ENCODE measurements at regions of chr7 and their contacts with region 1.

Region 1: DNA sequence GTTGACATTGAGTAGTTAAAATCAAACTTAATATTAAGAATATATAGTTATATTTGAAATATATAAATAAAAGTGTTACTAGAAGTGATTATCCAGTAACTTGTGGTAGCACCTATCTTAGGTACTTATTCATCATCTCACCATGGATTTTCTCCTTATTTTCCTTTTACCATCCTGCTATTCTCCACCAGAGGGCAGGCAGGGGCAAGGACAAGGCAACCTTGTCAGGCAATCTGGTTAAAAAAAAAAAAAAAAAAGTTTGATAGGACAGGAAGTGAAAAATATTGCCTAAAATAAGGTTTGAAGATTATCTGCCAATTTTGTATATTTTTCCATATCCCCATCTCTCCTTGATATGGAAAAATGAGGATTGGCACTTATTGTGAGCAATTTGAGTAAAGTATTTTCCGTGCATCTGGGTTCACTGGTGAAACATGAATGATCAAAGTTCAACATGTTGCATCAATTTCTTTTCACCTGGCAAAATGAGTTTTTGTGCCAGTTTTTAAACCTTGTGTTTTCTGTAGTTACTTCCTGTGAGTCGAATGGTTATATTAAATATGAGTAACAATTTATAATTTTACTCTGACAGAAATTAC is 256.7 kb downstream of the AGMO start:
- DNase-seq: peak in 2 of 3 donors; percentile 28 to 66
- ATAC-seq: no peak
- H3K4me3 ChIP-seq: no peak overlapping the region
- H3K27ac ChIP-seq: no peak overlapping the region
- H3K4me1 ChIP-seq: no peaks in the 10 kb centered on the region
- H3K27me3 ChIP-seq: no peaks in the 10 kb centered on the region

Region 2: GRCh38 chr7:15593382-15593781 is 288.3 kb after region 1 on chr7:
- intact Hi-C with region 1: no loop called
- DNase-seq: no peak
- ATAC-seq: no peak
- H3K4me3 ChIP-seq: no peak overlapping the region
- H3K27ac ChIP-seq: no peak overlapping the region
- H3K4me1 ChIP-seq: no peaks in the 10 kb centered on the region
- H3K27me3 ChIP-seq: no peaks in the 10 kb centered on the region

Region 3: DNA sequence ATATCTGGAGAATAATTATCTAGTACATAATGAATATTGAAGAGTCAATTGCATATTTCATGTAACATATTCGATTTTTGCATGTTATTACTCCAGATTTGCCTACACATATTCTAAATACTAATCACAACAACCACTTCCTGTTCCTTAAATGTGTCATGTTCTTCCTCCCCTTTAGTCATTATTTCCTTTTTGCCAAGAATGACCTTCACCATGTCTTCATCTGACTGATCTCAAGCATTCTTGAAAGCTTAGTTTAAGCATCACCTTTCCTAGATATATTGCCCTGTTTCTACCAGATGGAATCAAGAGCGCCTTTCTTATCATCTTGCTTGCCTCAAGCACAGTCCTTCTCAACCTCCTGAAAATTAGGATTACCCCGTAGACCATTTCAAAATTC is 404.9 kb after region 1 on chr7:
- intact Hi-C with region 1: loop called in 1 of 4 experiments (anchors 10 kb)
- DNase-seq: no peak
- ATAC-seq: no peak
- H3K4me3 ChIP-seq: no peak overlapping the region
- H3K27ac ChIP-seq: no peak overlapping the region
- H3K4me1 ChIP-seq: no peaks in the 10 kb centered on the region
- H3K27me3 ChIP-seq: no peaks in the 10 kb centered on the region

Region 4: DNA sequence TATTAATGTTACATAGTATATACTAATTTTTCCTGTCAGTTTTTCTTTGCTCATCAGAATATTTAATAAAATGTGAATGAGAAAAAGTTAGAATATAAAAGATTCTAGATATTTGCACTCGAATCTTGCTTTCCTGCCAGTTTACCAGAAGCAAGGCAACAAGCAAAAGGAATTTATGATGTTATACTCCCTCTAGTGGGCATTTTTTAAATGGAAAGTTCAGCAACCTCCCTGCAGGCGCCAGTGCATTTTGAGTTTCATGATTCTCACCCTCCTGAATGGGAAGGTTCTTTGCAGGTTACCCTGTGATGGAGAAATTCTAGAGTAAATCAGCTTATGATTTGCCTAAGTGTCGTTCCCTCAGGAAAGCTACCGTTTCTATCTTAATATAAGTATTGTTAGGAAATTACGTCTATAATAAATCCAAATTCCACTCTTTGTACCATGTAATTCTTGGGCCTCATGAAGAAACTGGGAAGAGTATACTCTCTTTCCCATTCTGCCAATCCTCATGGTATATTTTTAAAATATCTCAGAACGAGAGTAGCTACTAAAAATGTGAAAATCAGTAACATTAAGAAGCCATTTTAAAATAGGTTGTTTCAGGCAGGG is 766.3 kb after region 1 on chr7:
- intact Hi-C with region 1: loop called in 2 of 4 experiments (anchors 5 to 10 kb)
- DNase-seq: peak in 1 of 3 donors; percentile 48
- ATAC-seq: peak in 1 of 2 donors; percentile 58
- H3K4me3 ChIP-seq: no peak overlapping the region
- H3K27ac ChIP-seq: no peak overlapping the region
- H3K4me1 ChIP-seq: no peaks in the 10 kb centered on the region
- H3K27me3 ChIP-seq: no peaks in the 10 kb centered on the region

Region 5: DNA sequence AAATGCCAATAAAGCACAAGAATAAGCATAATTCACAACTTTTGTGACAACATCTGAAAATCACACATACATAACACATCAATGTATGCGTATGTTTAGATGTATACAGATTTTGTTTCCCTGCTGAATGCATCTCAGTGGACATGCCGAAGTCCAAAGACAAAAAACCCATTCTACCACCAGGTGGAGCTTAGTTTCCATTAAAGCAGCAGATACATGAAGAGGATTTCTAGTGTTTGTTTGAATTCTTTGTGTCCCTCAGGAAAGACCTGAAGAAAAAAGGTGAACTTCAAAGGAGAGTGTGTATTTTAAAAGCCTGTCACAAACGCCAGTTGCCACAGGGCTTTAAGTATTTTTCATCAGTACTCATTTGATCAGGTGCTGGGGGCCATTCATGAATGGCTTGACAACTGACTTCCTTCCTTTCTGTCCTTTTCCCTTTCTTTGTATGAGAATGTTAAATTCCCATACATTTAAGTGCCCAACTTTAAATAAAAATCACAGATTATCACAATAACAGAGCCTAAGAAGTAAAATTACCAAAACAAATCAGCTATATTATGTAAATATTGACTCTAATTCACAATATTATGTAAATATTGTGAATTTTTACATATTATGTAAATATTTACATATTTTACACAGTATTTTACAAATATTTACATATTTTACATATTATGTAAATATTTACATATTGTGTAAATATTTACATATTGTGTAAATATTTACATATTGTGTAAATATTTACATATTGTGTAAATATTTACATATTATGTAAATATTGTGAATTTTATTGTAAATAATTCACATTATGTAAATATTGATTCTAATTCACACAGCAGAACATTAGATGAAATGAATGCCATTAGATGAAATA is 773.2 kb after region 1 on chr7:
- intact Hi-C with region 1: loop called in 2 of 4 experiments (anchors 5 to 10 kb)
- DNase-seq: no peak
- ATAC-seq: peak; percentile 46 to 54
- H3K4me3 ChIP-seq: no peak overlapping the region
- H3K27ac ChIP-seq: no peak overlapping the region
- H3K4me1 ChIP-seq: no peaks in the 10 kb centered on the region
- H3K27me3 ChIP-seq: no peaks in the 10 kb centered on the region